Mammary epithelial cell (primary cell): ENCODE measurements at regions of chr6 and their contacts with region 1.

Region 1: GRCh38 chr6:1200718-1201105 is 111.2 kb upstream of the FOXQ1 start:
- DNase-seq: no peak
- H3K4me3 ChIP-seq: no peak overlapping the region
- H3K27ac ChIP-seq: no peak overlapping the region
- H3K4me1 ChIP-seq: no peaks in the 10 kb centered on the region
- H3K27me3 ChIP-seq: peaks cover 2% of the 10 kb centered on the region
- CTCF ChIP-seq: no peak

Region 2: DNA sequence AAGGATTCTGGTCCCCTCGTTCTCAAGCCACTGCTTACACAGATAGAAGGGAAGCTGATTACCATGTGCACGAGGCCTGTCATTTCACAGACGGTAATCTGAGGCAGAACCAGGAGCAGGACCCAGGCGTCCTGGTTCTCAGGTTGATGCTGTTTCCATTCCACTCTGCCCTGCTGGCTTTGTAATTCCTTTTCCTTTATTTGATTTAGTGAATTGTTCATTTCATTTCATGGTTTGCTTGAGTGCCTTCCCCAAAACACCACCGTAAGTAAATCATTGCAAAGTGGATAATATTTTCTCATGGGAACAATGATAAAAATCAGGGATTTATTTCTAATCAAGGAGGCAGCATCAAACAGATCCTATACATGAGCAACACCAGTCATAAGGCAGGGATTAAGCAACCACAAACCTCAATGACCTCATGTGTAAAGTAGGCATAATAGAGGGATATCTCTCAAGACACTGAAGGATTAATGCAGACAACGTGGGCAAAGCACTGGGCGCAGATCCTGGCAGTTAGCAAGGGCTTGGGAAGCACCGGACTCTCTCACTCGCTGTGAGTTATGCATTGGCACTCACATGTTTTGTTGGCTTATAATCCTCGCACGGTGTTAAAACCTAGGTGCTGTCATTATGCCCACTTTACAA is 118.3 kb before region 1 on chr6:
- CTCF ChIA-PET with region 1: no interaction called
- dilution Hi-C with region 1: loop called (anchors 10 kb)
- in situ Hi-C with region 1: no loop called
- intact Hi-C with region 1: no loop called
- DNase-seq: peak; percentile 74
- H3K4me3 ChIP-seq: no peak overlapping the region
- H3K27ac ChIP-seq: no peak overlapping the region
- H3K4me1 ChIP-seq: peaks cover 11% of the 10 kb centered on the region
- H3K27me3 ChIP-seq: no peaks in the 10 kb centered on the region
- CTCF ChIP-seq: no peak

Region 3: DNA sequence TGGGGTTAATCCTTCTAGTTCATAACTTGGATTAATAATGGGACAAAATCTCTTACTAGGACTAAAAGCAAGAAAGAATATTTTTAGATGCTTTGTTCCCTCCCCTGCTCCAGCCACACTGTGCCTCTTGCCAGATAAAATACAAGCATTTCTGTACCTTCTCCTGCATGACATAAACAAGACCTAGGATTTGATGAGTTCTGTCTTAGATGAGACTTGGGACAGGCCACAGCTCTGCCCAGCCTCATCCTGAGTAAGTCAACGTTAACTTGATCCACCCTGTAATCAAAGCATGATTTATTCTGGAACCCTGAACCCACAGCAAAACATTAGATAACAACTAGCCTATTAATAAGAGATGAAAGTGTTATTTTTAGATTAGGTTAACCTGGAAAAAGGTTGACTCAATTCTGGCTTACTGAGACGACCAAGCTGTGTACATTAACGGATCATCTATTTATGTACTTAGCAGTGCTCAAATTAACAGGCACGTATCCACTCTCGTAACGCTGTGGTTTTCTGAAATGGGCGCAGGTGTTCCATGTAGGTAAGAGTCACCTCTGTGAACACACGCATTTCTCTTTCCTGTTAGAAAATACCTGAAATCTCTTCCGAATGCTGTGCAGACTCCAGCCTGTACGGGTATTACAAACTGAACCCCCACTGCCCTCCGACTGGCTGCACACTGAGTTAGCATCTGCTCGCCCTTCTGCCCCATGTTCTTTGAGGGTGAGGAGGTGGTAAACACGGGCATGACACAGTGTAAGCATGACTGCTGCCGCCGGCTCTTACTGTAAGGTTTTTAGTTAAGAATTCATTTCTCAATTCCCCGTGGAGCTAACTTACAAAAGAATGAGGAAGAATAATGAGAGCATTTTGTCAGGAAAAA is 20.9 kb before region 1 on chr6:
- CTCF ChIA-PET with region 1: no interaction called
- dilution Hi-C with region 1: no loop called
- in situ Hi-C with region 1: no loop called
- intact Hi-C with region 1: no loop called
- DNase-seq: no peak
- H3K4me3 ChIP-seq: no peak overlapping the region
- H3K27ac ChIP-seq: no peak overlapping the region
- H3K4me1 ChIP-seq: peaks cover 4% of the 10 kb centered on the region
- H3K27me3 ChIP-seq: no peaks in the 10 kb centered on the region
- CTCF ChIP-seq: no peak